ENCODE measurements at regions of chr7 and their contacts with region 1.

Region 1: GRCh38 chr7:90622670-90623069 is 26.5 kb downstream of the CDK14 start:
- H3K4me3 ChIP-seq: no peak overlapping the region
- H3K27ac ChIP-seq: no peak overlapping the region
- H3K4me1 ChIP-seq: peaks cover 14% of the 10 kb centered on the region
- CTCF ChIP-seq: no peak

Region 2: DNA sequence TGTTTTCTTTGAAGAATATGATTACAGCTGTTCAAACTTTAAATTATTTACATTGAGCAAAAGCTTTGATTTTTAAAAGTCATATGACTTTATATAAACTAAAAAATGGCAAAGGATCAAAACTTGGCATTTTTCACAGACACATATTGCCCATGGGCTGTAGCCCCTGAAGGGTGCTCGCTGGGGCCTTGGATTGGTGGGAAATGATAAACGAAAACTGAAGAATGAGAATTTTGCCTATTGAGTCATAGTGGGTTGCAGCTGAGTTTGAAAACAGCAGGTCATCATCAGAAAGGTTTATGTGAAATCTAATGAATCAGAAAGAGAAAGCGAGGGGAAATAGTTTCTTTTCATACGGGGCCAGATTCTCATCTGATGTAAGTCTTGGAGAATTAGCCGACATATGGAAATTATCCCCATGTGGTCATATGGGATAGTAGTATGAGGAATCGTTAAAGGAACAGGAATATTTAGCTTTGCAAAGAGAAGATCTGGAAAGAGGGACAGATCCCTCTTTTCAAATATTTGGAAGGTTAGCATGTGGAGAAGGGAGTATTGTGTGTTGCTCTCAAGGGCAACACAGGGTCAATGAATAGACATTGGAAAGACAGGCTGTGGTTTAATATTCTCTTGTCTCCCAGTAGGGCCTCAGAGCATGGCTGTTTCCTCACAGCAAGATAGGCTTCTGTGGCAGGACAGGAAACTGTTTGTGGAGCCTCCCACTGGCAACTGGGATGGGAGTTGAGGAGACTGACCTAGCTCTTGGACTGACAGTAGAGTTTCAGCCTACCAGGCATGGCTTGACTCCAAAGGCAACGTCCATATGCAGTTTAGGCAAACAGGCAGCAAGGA is 760.6 kb after region 1 on chr7:
- CTCF ChIA-PET with region 1: no interaction called
- POLR2A ChIA-PET with region 1: interaction called, 10 read pairs
- H3K4me3 ChIP-seq: no peak overlapping the region
- H3K27ac ChIP-seq: no peak overlapping the region
- H3K4me1 ChIP-seq: no peaks in the 10 kb centered on the region
- CTCF ChIP-seq: no peak